Activated CD4-positive, alpha-beta T cell treated with anti-CD3 and anti-CD28 coated beads for 36 hours (primary cell): ENCODE measurements at regions of chr20 and their contacts with region 1.

Region 1: GRCh38 chr20:22339091-22339881 is 245.1 kb downstream of the FOXA2 start:
- DNase-seq: peak; percentile 65
- ATAC-seq: peak; percentile 47
- H3K4me3 Mint-ChIP-seq: no peak overlapping the region
- H3K27ac Mint-ChIP-seq: no peak overlapping the region
- H3K4me1 Mint-ChIP-seq: peaks cover 2% of the 10 kb centered on the region
- H3K27me3 Mint-ChIP-seq: peaks cover 3% of the 10 kb centered on the region

Region 2: DNA sequence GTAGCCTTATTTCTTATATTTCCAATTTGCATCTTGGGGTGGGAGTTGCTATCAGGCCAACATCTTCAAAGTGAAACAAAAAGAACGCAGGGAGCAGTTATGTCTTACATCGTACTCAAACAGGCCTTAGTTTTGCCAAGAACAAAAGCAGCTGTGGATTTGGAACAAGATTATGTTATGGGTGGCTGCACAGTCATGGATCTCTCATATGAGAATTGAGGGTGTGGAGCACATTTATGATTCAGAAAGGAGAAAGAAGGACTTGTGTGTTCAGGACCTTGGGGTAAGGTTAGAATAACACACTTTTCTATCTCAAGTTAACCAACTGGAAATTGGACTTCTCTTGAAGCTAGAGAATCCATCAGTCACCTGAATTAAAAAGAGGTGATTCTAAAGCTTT is 14.8 kb before region 1 on chr20:
- CTCF ChIA-PET with region 1: no interaction called
- POLR2A ChIA-PET with region 1: no interaction called
- intact Hi-C with region 1: no loop called
- DNase-seq: no peak
- ATAC-seq: no peak
- H3K4me3 Mint-ChIP-seq: no peak overlapping the region
- H3K27ac Mint-ChIP-seq: no peak overlapping the region
- H3K4me1 Mint-ChIP-seq: no peaks in the 10 kb centered on the region
- H3K27me3 Mint-ChIP-seq: peaks cover 2% of the 10 kb centered on the region

Region 3: DNA sequence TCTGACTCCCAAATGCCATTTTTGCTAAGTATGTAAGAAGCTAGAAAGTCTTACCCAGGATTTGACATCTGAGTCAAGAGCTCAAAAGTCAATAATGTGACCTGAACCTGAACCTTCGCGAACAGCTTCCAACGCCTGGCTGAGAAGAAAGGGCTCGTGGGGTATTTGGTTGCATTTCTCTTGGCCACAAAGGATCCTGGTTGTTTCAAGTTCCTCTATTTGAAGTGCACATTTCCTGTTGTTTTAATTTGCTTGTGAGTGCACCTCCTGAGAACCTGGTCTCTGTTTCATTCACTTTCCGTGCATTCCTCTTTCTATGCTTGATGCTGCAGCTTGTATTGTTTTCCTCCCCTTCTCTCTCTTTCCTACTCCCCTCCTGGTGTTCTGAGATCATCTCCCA is 32.6 kb after region 1 on chr20:
- CTCF ChIA-PET with region 1: no interaction called
- POLR2A ChIA-PET with region 1: no interaction called
- intact Hi-C with region 1: no loop called
- DNase-seq: no peak
- ATAC-seq: no peak
- H3K4me3 Mint-ChIP-seq: no peak overlapping the region
- H3K27ac Mint-ChIP-seq: no peak overlapping the region
- H3K4me1 Mint-ChIP-seq: peaks cover 17% of the 10 kb centered on the region
- H3K27me3 Mint-ChIP-seq: no peaks in the 10 kb centered on the region

Region 4: DNA sequence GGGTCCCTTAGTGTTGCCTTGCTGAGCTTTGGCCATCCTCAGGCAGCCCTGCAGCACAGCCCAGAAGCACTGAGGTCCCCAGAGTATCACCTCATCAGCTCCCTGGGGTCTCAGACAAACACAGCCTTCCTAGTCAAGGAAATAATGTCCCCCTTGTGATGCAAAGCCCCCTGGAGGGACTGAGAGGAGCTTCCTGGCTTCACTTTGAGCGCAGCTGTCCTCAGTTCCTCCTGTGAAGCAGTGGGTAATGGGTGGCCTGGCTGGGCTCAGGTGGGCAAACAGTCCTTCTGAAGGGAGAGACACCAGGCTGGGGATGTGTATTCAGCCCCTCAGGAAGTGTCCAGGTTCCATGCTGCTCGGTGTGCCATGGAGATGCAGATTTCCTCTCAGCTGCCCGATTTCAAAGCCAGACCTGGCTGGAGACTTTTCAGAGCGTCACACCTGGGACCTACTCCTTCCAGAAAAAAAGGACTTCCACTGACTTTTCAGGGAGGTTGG is 324.3 kb after region 1 on chr20:
- CTCF ChIA-PET with region 1: no interaction called
- POLR2A ChIA-PET with region 1: no interaction called
- intact Hi-C with region 1: no loop called
- DNase-seq: no peak
- ATAC-seq: no peak
- H3K4me3 Mint-ChIP-seq: no peak overlapping the region
- H3K27ac Mint-ChIP-seq: no peak overlapping the region
- H3K4me1 Mint-ChIP-seq: no peaks in the 10 kb centered on the region
- H3K27me3 Mint-ChIP-seq: peaks cover 5% of the 10 kb centered on the region

Region 5: DNA sequence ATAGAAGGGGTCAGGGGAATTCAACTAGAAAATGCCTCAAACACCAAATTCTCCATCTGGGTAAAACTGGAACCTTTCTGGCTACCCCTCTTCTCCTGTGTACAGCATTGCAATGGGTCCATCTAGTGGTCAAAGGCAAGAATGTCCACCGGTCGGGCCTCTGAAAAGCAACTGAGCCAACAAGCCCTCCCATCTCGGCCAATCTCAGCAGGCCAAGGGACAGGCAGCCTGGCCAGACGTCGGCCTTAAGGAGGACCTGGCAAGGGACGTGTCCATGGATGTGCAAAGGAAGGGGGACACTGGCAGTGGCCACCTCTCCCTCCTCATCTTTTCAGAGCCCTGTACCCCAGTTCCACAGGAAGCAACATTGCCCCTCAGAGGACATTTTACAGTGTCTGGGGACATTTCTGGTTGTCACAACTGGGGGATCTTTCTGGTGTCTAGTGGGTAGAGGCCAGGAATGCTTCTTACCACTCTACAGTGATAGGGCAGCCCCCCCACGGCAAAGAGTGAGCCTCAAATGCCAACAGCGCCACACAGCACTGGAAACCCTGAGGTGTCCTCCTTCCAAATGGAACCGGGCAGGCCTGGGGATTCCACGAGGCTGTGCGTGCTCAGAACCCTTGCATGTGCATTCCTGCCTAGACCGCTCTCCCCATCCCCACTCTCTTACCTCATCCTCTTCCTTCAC is 344.9 kb after region 1 on chr20:
- CTCF ChIA-PET with region 1: interaction called, 19 read pairs
- POLR2A ChIA-PET with region 1: no interaction called
- intact Hi-C with region 1: loop called (anchors 1 kb)
- DNase-seq: peak; percentile 61
- ATAC-seq: peak; percentile 61
- H3K4me3 Mint-ChIP-seq: no peak overlapping the region
- H3K27ac Mint-ChIP-seq: no peak overlapping the region
- H3K4me1 Mint-ChIP-seq: peaks cover 3% of the 10 kb centered on the region
- H3K27me3 Mint-ChIP-seq: peaks cover 6% of the 10 kb centered on the region

Region 6: DNA sequence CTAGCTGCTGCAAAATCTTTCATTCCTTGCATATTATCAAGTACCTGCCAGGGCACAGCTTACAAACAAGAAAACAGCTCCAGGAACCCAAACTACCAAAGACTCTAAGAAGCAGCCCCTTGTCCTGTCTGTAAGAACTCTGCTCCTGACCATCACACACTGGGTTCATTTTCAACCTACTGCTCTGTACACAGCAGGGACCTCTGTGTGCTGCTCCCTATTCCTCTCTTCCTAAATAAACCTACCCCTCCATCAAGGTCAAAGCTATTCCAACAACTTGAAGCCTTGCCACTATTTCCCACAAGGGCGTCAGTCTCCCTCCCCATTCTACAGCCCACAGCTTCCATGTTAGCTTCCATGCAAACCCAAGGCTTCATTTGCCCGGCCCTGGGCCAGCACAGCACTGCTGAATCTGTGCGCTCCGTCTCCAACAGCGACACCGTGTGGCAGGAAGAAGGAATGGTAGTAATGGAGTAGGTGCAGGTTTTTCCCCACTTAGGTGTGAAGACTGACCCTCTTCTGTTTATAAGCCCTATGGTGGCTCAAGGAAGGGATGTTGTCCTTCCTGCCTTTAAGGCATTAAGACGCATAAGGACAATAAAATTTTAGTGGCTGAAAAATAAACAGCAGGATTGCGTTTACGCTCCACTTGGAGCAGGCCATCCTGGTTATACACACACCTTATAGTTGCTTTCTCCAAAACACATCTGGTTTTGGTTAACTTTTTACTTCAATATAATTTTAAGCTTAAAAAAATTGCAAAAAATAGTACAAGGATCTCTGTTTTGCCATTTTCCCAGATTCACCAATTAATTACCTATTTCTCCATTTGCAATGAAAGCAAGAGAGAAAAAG is 896.1 kb after region 1 on chr20:
- CTCF ChIA-PET with region 1: no interaction called
- POLR2A ChIA-PET with region 1: no interaction called
- intact Hi-C with region 1: loop called in 1 of 2 experiments (anchors 2 kb)
- DNase-seq: peak; percentile 72
- ATAC-seq: peak; percentile 63
- H3K4me3 Mint-ChIP-seq: no peak overlapping the region
- H3K27ac Mint-ChIP-seq: no peak overlapping the region
- H3K4me1 Mint-ChIP-seq: no peaks in the 10 kb centered on the region
- H3K27me3 Mint-ChIP-seq: peaks cover 2% of the 10 kb centered on the region

Region 7: DNA sequence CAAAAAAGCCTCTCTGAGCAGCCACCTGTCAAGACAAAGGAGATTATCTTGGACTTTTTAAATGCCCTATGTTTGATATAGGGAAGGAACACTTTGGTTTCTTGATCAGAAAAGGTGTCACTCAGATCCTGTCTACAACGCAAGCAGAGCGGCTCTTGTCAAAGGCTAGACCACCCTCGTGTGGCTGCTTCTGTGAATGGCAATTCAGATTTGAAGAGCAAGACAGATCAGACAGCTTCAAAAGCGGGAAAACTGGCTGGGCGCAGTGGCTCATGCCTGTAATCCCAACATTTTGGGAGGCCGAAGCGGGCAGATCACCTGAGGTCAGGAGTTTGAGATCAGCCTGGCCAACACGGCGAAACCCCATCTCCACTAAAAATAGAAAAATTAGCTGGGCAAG is 1001.2 kb after region 1 on chr20:
- CTCF ChIA-PET with region 1: interaction called, 3 read pairs
- POLR2A ChIA-PET with region 1: no interaction called
- intact Hi-C with region 1: loop called in 1 of 2 experiments (anchors 5 kb)
- DNase-seq: peak; percentile 61
- ATAC-seq: peak; percentile 47
- H3K4me3 Mint-ChIP-seq: no peak overlapping the region
- H3K27ac Mint-ChIP-seq: no peak overlapping the region
- H3K4me1 Mint-ChIP-seq: no peaks in the 10 kb centered on the region
- H3K27me3 Mint-ChIP-seq: no peaks in the 10 kb centered on the region